Activated CD4-positive, alpha-beta memory T cell treated with anti-CD3 and anti-CD28 coated beads for 36 hours (primary cell): ENCODE measurements at regions of chr20 and their contacts with region 1.

Region 1: DNA sequence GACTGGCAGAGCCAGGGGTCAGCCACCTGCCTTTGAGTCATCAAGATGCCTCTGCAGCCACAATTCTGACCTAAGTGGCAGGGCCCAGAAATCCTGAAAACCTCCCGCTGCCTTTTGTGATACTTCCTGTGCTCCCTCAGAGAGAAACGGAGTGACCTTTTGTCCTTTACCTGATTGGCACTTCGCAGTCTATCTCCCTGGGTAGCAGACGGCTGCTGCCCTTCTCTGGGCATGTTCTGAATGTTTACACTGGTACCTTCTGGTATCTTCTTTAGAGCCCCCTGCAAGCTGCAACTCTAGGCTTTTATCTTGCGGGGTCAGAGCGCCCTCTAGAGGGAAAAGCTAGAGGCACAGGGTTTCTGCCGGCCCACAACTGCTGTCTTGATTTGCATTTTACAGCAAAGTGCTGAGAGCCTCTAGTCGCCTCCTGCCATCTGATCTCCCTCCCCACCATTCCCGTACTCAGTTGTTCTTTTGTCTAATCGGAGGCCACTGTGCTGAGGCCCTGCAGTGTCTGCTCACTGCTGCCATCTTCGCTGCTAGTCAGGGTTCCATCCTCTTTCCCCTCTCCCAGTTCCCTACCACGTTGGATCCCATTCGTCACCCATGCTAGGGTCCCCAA is 26.9 kb downstream of the SPATA2 start:
- DNase-seq: peak; percentile 75
- H3K4me3 Mint-ChIP-seq: no peak overlapping the region
- H3K27ac Mint-ChIP-seq: no peak overlapping the region
- H3K4me1 Mint-ChIP-seq: peaks cover 20% of the 10 kb centered on the region
- H3K27me3 Mint-ChIP-seq: no peaks in the 10 kb centered on the region

Region 2: GRCh38 chr20:49901588-49901987 is 13.1 kb after region 1 on chr20:
- CTCF ChIA-PET with region 1: interaction called, 14 read pairs
- POLR2A ChIA-PET with region 1: no interaction called
- intact Hi-C with region 1: no loop called
- DNase-seq: no peak
- H3K4me3 Mint-ChIP-seq: no peak overlapping the region
- H3K27ac Mint-ChIP-seq: no peak overlapping the region
- H3K4me1 Mint-ChIP-seq: no peaks in the 10 kb centered on the region
- H3K27me3 Mint-ChIP-seq: no peaks in the 10 kb centered on the region

Region 3: GRCh38 chr20:49915378-49916145 is 27.1 kb after region 1 on chr20 and contains the start of gene SPATA2:
- CTCF ChIA-PET with region 1: interaction called, 13 read pairs
- POLR2A ChIA-PET with region 1: interaction called, 7 read pairs
- intact Hi-C with region 1: no loop called
- DNase-seq: peak; percentile 94
- H3K4me3 Mint-ChIP-seq: peak within 1 kb of the TSS; percentile 98
- H3K27ac Mint-ChIP-seq: peak within 1 kb of the TSS; percentile 98
- H3K4me1 Mint-ChIP-seq: peaks cover 31% of the 10 kb centered on the region
- H3K27me3 Mint-ChIP-seq: no peaks in the 10 kb centered on the region
- total RNA-seq, gene SPATA2: 7.9 to 8.6 TPM

Region 4: GRCh38 chr20:49928401-49929141 is 40.1 kb after region 1 on chr20:
- CTCF ChIA-PET with region 1: interaction called, 3 read pairs
- POLR2A ChIA-PET with region 1: no interaction called
- intact Hi-C with region 1: loop called (anchors 5 kb)
- DNase-seq: peak; percentile 86
- H3K4me3 Mint-ChIP-seq: no peak overlapping the region
- H3K27ac Mint-ChIP-seq: no peak overlapping the region
- H3K4me1 Mint-ChIP-seq: peaks cover 5% of the 10 kb centered on the region
- H3K27me3 Mint-ChIP-seq: peaks cover 3% of the 10 kb centered on the region

Region 5: GRCh38 chr20:50087229-50087821 is 198.9 kb after region 1 on chr20:
- CTCF ChIA-PET with region 1: no interaction called
- POLR2A ChIA-PET with region 1: no interaction called
- intact Hi-C with region 1: no loop called
- DNase-seq: no peak
- H3K4me3 Mint-ChIP-seq: no peak overlapping the region
- H3K27ac Mint-ChIP-seq: no peak overlapping the region
- H3K4me1 Mint-ChIP-seq: peaks cover 35% of the 10 kb centered on the region
- H3K27me3 Mint-ChIP-seq: no peaks in the 10 kb centered on the region